Gastrocnemius medialis (tissue), 4 donors: ENCODE measurements at regions of chr7 and their contacts with region 1.

Region 1: GRCh38 chr7:138738551-138739335 is 37.6 kb upstream of the SVOPL start:
- DNase-seq: peak; percentile 19 to 52
- ATAC-seq: no peak
- H3K4me3 ChIP-seq: no peak overlapping the region
- H3K27ac ChIP-seq: no peak overlapping the region
- H3K4me1 ChIP-seq: no peaks in the 10 kb centered on the region
- H3K27me3 ChIP-seq: no peaks in the 10 kb centered on the region
- CTCF ChIP-seq: peak; percentile 58 to 80 (median 64)
- POLR2A ChIP-seq: no peak

Region 2: DNA sequence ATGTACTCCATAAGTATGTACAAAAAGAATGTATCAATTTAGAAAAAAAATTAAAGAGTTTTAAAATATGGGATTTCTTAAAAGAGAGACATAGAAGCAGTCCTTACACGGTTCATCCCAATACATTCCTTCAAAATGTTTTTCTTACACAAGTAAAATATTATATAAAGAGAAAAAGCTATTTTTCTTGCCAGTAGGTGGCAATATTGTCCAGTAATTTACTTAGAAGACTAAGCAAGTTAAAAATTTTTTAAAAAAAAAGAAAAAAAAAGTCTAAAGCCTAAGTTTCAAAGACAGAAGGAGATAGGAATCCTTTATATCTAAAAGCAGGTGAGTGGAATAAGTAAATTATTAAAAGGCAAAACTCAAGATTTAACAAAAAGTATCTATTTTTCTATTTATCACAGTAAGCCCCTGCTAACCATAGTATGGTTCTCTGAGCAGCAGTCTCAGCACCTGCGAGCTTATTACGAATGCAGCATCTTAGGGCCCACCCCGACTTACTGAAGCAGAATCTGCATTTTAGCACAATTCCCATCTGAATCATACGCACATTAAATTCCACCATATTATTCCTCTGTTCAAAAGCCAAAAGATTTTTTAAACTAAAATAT is 1132.6 kb before region 1 on chr7:
- in situ Hi-C with region 1: loop called in 1 of 4 experiments (anchors 25 kb)
- intact Hi-C with region 1: no loop called
- DNase-seq: no peak
- ATAC-seq: no peak
- H3K4me3 ChIP-seq: no peak overlapping the region
- H3K27ac ChIP-seq: no peak overlapping the region
- H3K4me1 ChIP-seq: no peaks in the 10 kb centered on the region
- H3K27me3 ChIP-seq: no peaks in the 10 kb centered on the region
- CTCF ChIP-seq: peak in 3 of 5 experiments; percentile 7 to 52 (median 37)
- POLR2A ChIP-seq: no peak

Region 3: DNA sequence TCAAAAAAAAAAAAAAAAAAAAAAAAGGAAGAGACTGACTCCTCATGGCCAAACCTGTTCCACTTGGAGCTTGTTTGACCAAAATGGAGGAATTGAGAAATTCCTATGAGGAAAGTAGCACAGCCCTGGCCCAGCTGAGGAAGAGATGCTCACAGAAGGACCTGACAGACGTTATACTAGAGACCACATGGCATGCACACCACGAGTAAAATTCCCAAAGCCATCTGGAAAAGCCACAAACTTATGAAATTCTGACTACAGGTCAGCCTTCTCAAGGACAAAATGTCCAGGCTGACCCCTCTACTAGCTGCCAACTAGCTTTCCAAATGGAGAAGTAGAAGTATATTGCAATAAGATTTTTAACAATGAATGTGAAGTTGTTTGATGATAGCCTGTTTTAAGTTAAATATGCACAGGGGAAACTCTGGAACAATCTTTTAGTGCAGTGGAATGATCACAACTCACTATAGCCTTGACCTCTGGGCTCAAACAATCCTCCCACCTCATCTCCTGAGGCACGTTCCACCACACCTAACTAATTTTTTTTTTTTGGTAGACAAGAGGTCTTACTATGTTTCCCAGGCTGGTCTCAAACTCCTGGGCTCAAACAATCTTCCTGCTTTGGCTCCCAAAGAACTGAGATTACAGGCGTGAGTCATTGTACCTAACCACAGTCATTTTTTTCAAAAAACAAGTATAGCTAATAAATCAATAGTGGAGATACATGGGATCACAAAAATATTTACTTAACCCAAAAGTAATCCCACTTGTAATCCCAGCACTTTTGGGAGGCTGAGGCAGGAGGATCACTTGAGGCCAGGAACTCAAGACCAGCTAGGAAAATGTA is 586.8 kb before region 1 on chr7:
- in situ Hi-C with region 1: loop called in 2 of 4 experiments (anchors 10 to 25 kb)
- intact Hi-C with region 1: no loop called
- DNase-seq: no peak
- ATAC-seq: no peak
- H3K4me3 ChIP-seq: no peak overlapping the region
- H3K27ac ChIP-seq: no peak overlapping the region
- H3K4me1 ChIP-seq: no peaks in the 10 kb centered on the region
- H3K27me3 ChIP-seq: no peaks in the 10 kb centered on the region
- CTCF ChIP-seq: no peak
- POLR2A ChIP-seq: no peak

Region 4: GRCh38 chr7:138161600-138162081 is 577.1 kb before region 1 on chr7:
- in situ Hi-C with region 1: loop called in 2 of 4 experiments (anchors 10 to 25 kb)
- intact Hi-C with region 1: loop called (anchors 1 kb)
- DNase-seq: peak; percentile 26 to 28
- ATAC-seq: peak in 1 of 2 donors; percentile 36
- H3K4me3 ChIP-seq: no peak overlapping the region
- H3K27ac ChIP-seq: no peak overlapping the region
- H3K4me1 ChIP-seq: no peaks in the 10 kb centered on the region
- H3K27me3 ChIP-seq: no peaks in the 10 kb centered on the region
- CTCF ChIP-seq: peak; percentile 9 to 42 (median 36)
- POLR2A ChIP-seq: no peak

Region 5: DNA sequence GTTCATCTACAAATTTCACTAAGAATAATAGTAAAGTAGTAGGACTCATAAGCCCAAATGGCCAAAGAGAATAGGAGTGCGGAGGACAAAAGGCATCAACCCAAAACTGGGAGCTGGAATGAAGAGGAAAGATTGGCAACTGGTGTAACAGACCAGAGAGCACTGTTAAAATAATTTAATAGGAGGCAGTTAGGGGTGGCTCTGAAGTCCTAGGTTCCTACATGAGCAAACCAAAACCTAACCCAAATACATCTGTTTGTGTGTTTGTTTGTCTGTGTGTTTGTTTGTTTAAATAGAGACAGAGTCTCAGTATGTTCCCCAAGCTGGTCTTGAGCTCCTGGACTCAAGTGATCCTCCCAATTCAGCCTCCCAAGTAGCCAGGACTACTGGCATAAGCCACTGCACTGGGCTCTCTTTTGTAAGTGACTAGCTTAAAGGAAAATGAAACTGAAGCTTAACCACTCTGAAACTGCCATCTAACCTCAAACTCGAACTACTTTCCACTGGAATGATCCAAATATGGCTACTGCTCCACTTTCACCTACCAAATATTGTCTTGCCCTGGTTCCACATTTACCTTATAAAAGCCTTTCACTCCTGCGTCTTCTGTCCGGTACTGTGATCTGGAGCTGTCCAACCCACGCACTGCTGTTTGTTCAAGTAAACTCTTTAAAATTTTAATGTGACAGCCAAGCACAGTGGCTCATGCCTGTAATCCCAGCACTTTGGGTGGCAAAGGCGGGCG is 567.6 kb before region 1 on chr7:
- in situ Hi-C with region 1: loop called in 2 of 4 experiments (anchors 10 to 25 kb)
- intact Hi-C with region 1: no loop called
- DNase-seq: no peak
- ATAC-seq: no peak
- H3K4me3 ChIP-seq: no peak overlapping the region
- H3K27ac ChIP-seq: no peak overlapping the region
- H3K4me1 ChIP-seq: no peaks in the 10 kb centered on the region
- H3K27me3 ChIP-seq: no peaks in the 10 kb centered on the region
- CTCF ChIP-seq: no peak
- POLR2A ChIP-seq: no peak

Region 6: GRCh38 chr7:138900035-138900828 is 161.5 kb after region 1 on chr7:
- in situ Hi-C with region 1: no loop called
- intact Hi-C with region 1: no loop called
- DNase-seq: no peak
- ATAC-seq: no peak
- H3K4me3 ChIP-seq: no peak overlapping the region
- H3K27ac ChIP-seq: no peak overlapping the region
- H3K4me1 ChIP-seq: no peaks in the 10 kb centered on the region
- H3K27me3 ChIP-seq: no peaks in the 10 kb centered on the region
- CTCF ChIP-seq: no peak
- POLR2A ChIP-seq: no peak

Region 7: GRCh38 chr7:138919216-138919615 is 180.5 kb after region 1 on chr7:
- in situ Hi-C with region 1: no loop called
- intact Hi-C with region 1: no loop called
- DNase-seq: no peak
- ATAC-seq: no peak
- H3K4me3 ChIP-seq: no peak overlapping the region
- H3K27ac ChIP-seq: no peak overlapping the region
- H3K4me1 ChIP-seq: no peaks in the 10 kb centered on the region
- H3K27me3 ChIP-seq: no peaks in the 10 kb centered on the region
- CTCF ChIP-seq: no peak
- POLR2A ChIP-seq: no peak

Region 8: DNA sequence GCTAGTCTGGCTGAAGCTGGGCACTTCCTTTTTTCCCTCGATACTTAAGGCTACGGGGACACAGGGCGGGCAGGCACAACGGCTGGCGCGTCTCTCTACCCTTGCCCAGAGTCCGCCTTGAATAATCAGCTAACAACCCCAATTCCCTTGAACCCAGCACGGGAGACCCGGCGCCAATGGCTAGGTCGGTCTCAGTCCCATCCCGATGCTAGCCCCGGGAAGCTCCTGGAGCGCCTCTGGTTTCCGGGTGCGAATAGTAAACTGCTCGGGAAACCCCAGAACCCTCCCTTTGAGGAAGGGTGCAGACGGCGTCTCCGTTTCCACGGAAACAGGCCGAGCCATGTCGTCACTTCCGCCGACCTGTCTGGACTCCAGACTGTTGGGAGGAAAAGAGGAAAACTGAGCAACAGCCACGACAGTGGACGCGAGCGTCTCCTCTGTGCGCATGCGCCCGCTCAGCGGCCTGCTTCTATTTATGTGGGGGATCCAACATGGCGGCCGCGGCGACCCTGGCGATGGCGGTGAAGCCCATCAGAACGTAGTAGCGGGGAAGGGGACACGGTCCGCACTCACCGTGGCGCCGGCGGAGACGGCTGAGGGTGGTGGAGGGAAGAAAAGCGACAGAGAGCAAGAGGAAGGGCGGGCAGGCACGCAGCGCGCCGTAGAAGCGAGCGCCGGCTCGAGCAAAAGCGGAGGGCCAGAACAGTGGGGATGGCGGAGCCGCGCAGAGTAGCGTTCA is 492.2 kb after region 1 on chr7 and contains the start of gene UBN2:
- in situ Hi-C with region 1: no loop called
- intact Hi-C with region 1: no loop called
- DNase-seq: peak; percentile 91 to 93
- ATAC-seq: peak; percentile 98
- H3K4me3 ChIP-seq: peak within 1 kb of the TSS; percentile 83 to 99 (median 92)
- H3K27ac ChIP-seq: peak within 1 kb of the TSS; percentile 88 to 99 (median 96)
- H3K4me1 ChIP-seq: peaks cover 32 to 40% of the 10 kb centered on the region in 2 donors
- H3K27me3 ChIP-seq: no peaks in the 10 kb centered on the region
- CTCF ChIP-seq: no peak
- POLR2A ChIP-seq: peak; percentile 49 to 79
- total RNA-seq, gene UBN2: 12.0 to 24.8 (median 17.2) TPM